ENCODE measurements at regions of chr12 and their contacts with region 1.

Region 1: GRCh38 chr12:92899388-92900001 is 29.6 kb downstream of the EEA1 start:
- DNase-seq: peak; percentile 87
- H3K4me3 ChIP-seq: no peak overlapping the region
- H3K27ac ChIP-seq: peak overlapping the region; percentile 76
- H3K4me1 ChIP-seq: peaks cover 22% of the 10 kb centered on the region
- H3K27me3 ChIP-seq: no peaks in the 10 kb centered on the region
- CTCF ChIP-seq: no peak
- POLR2A ChIP-seq: no peak

Region 2: DNA sequence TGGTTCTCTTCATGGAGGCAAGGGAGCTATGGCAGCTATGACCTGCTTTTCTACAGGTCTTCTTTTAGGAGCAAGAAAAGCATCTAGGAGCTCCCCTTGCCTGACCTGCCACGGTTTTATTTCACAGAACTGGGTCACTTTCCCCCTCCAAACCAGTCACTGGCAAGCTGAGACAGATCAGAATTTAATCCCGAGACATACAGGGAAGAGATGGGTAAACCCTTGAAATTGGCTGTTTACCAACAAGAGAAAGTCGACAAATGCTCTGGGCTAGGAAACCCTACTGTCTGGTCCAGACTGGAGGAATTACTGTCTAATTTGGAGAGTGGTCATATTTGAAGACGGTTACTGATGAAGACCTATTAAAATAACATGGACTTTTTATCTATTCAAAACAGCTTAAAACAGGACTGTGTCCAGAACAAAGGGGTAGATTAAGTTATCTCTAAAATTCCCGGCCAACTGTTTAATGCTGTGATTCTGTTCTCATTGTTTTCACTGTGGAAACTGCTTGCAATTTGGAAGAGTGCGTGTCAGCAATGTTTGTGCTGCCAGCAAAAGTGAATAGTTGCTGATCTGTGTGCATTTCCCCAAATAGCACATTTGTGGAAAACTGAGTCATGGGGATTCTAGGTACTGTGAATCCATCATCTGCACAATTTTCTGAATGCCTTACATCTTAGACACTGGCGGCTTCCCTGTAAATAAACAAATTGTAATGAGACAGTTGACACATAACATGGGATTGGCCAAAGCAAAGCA is 103.0 kb after region 1 on chr12:
- CTCF ChIA-PET with region 1: no interaction called
- POLR2A ChIA-PET with region 1: interaction called, 12 read pairs
- dilution Hi-C with region 1: no loop called
- intact Hi-C with region 1: no loop called
- DNase-seq: peak; percentile 99
- H3K4me3 ChIP-seq: no peak overlapping the region
- H3K27ac ChIP-seq: peak overlapping the region; percentile 95
- H3K4me1 ChIP-seq: peaks cover 26% of the 10 kb centered on the region
- H3K27me3 ChIP-seq: no peaks in the 10 kb centered on the region
- CTCF ChIP-seq: no peak
- POLR2A ChIP-seq: no peak

Region 3: GRCh38 chr12:93322784-93323183 is 423.3 kb after region 1 on chr12:
- CTCF ChIA-PET with region 1: no interaction called
- POLR2A ChIA-PET with region 1: no interaction called
- dilution Hi-C with region 1: no loop called
- intact Hi-C with region 1: no loop called
- DNase-seq: peak; percentile 67
- H3K4me3 ChIP-seq: no peak overlapping the region
- H3K27ac ChIP-seq: no peak overlapping the region
- H3K4me1 ChIP-seq: peaks cover 4% of the 10 kb centered on the region
- H3K27me3 ChIP-seq: no peaks in the 10 kb centered on the region
- CTCF ChIP-seq: no peak
- POLR2A ChIP-seq: no peak